GM10248 (cell line): ENCODE measurements at regions of chr1 and their contacts with region 1.

Region 1: DNA sequence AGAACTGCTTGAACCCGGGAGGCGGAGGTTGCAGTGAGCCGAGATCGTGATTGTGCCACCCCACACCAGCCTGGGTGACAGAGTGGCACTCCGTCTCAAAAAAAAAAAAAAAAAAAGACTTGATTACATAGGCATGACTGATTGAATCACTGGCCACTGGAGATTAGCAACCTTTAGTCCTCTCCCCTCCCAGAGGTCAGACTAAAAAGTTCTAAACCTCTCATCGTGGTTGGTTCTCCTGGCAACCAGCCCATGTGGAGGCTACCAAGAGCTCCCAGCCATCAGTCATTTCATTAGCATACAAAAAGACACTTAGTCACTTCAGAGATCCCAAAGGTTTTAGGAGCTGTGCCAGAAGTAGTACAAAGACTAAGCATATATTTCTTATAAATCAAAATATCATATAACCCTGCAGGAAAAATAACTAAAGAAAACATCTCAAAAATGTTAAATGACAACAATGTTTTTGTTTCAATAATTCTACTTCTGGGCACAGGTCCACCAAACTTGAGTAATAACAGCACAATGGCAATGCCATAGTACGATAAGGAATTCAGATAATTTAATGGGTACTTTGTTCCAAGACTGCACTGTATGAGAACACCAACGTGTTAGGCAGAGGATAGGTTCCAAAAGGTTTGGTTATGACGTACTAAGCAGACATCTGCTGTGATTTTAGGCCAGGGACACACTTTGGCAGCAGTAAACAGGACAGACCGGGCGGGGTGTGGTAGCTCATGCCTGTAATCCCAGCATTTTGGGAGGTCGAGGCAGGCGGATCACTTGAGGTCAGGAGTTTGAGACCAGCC is 18.1 kb downstream of the USP48 start:
- DNase-seq: no peak
- CTCF ChIP-seq: no peak

Region 2: DNA sequence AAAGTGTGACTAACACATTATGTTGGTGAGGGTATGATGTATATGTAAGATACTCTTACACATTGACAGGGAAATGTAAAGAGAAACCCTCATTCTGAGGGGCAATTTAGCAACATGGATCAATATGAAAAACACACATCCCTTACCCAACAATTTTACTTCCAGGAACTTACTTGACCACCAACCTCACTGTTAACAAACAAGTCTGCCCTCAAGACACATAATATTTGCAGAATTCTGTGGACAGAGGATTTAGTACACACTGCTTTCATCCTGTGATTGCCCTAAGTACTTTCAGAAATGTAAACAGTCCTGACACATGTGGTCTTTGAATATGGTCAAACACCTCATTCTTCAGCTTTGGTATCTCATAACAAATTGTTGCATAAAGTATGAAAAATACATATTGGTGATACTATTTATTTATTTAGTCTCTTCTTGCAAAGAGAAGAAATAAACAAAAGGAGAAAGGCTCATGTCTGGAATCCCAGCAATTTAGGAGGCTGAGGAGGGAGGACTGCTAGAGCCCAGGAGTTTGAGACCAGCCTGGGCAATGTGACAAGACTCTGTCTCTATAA is 11.3 kb after region 1 on chr1:
- CTCF ChIA-PET with region 1: interaction called, 19 read pairs
- POLR2A ChIA-PET with region 1: interaction called, 7 read pairs
- DNase-seq: no peak
- CTCF ChIP-seq: no peak

Region 3: DNA sequence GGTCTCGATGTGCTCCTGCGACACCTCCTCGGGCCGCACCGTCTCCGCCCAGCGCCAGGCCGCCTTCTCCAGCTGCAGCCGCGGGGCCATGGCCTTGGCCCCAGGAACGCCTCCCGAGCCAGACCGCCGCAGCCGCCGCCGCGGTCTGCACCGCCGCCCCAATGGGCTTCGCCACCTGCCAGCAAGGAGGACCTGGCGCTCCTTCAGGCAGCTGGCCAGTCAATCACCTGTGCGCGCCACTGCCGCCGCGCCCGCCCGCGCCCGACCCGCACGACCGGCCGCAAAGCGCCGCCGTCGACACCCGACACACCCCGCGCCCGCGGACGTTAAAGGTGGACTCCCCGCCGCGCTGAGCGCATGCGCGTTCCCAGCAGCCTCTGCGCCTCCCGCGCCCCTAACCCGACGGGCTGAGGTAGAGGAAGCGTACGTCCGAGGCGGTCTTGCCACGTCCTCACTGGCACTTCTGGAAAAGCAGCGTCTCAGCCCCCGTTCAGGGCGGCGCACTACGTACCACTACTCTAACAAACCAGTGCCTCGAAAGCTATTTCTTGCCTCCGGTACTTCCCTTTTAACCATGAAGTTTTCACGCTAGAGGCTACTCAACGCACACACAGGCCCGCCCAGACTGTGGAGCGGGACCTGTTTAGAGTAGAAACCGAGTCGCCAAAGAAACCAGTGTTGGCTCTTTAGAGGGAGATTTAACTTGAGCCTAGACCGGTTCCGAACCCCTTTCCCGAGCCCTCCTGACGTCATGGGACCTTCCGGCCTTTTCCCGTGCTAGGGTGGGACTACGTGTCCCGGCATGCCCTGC is 18.3 kb after region 1 on chr1 and contains the start of gene USP48:
- CTCF ChIA-PET with region 1: interaction called, 19 read pairs
- POLR2A ChIA-PET with region 1: interaction called, 8 read pairs
- DNase-seq: peak; percentile 93
- CTCF ChIP-seq: no peak